Heart right ventricle (tissue), 16 donors: ENCODE measurements at regions of chr22 and their contacts with region 1.

Region 1: DNA sequence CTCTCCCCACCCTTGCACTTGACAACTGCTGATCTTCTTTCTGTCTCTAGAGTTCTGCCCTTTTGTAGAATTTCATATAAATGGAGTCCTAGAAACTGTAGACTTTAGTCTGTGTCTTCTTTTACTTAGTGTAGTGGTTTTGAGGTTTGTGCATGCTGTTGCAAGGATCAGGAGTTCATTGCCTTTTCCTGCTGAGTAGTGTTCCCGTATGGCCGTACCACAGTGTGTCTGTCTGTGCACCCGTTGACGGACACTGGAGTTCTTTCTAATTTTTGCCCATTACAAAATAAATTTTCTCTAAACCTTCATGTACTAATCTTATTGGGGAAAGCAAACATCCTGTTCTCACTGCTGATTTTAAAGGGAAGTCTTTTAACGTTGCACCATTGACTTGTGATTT is 138.1 kb downstream of the TBC1D22A start:
- DNase-seq: no peak
- ATAC-seq: no peak
- H3K4me3 ChIP-seq: no peak overlapping the region
- H3K27ac ChIP-seq: no peak overlapping the region
- H3K4me1 ChIP-seq: peaks cover 0 to 11% (median 0%) of the 10 kb centered on the region in 9 donors
- H3K27me3 ChIP-seq: no peaks in the 10 kb centered on the region
- CTCF ChIP-seq: no peak

Region 2: GRCh38 chr22:46923394-46923793 is 22.8 kb after region 1 on chr22:
- intact Hi-C with region 1: loop called in 1 of 10 experiments (anchors 1 kb)
- DNase-seq: no peak
- ATAC-seq: no peak
- H3K4me3 ChIP-seq: no peak overlapping the region
- H3K27ac ChIP-seq: no peak overlapping the region
- H3K4me1 ChIP-seq: no peaks in the 10 kb centered on the region
- H3K27me3 ChIP-seq: no peaks in the 10 kb centered on the region
- CTCF ChIP-seq: no peak